A549 (cell line): ENCODE measurements at regions of chr9 and their contacts with region 1.

Region 1: DNA sequence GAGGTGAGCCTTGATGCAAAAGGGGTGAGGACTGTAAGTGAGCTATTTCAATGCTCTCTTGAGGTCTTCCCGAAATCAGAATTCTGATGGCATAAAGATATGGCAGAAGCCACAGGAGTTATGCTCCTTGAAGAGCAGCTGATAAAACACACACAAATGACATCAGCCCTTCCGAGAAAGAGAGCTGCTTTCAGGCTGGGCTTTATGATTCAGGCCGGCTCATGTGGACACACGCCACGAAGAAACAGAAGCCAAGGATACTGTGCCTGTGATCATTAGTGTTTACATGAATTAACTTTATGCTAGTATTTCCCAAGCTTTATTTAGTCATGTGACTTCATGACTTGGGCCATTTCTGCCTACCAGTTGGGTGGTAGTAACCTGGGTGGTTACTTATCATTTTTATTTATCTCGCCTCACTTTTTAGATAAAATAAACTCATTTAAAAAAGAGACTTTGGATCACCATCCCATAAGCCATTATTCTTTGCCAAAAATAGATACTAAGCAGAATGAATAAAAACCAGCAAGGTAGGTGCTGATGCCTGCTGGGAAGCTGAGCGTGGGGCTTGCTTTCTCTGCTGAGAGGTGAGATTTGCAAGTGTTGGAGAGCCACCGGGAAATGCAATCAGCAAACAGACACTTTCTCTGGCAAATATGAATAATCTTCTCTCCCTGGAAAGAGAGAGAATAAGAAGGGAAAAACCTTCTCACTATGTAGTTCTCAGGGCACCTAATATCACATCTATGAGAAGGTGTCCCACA is 73.0 kb upstream of the SLC25A51 start:
- DNase-seq: no peak
- ATAC-seq: no peak
- H3K4me3 ChIP-seq: no peak overlapping the region
- H3K27ac ChIP-seq: no peak overlapping the region
- H3K4me1 ChIP-seq: peaks cover 45% of the 10 kb centered on the region
- CTCF ChIP-seq: no peak
- EP300 ChIP-seq: no peak
- POLR2A ChIP-seq: no peak
- RAD21 ChIP-seq: no peak

Region 2: GRCh38 chr9:37988041-37988440 is 11.1 kb after region 1 on chr9:
- CTCF ChIA-PET with region 1: interaction called, 15 read pairs
- POLR2A ChIA-PET with region 1: no interaction called
- DNase-seq: no peak
- ATAC-seq: no peak
- H3K4me3 ChIP-seq: no peak overlapping the region
- H3K27ac ChIP-seq: no peak overlapping the region
- H3K4me1 ChIP-seq: peaks cover 3% of the 10 kb centered on the region; the same call in 1 of the 3 replicates
- CTCF ChIP-seq: no peak
- EP300 ChIP-seq: no peak
- POLR2A ChIP-seq: no peak
- RAD21 ChIP-seq: no peak